Esophagus squamous epithelium (tissue), 5 donors: ENCODE measurements at regions of chr2 and their contacts with region 1.

Region 1: DNA sequence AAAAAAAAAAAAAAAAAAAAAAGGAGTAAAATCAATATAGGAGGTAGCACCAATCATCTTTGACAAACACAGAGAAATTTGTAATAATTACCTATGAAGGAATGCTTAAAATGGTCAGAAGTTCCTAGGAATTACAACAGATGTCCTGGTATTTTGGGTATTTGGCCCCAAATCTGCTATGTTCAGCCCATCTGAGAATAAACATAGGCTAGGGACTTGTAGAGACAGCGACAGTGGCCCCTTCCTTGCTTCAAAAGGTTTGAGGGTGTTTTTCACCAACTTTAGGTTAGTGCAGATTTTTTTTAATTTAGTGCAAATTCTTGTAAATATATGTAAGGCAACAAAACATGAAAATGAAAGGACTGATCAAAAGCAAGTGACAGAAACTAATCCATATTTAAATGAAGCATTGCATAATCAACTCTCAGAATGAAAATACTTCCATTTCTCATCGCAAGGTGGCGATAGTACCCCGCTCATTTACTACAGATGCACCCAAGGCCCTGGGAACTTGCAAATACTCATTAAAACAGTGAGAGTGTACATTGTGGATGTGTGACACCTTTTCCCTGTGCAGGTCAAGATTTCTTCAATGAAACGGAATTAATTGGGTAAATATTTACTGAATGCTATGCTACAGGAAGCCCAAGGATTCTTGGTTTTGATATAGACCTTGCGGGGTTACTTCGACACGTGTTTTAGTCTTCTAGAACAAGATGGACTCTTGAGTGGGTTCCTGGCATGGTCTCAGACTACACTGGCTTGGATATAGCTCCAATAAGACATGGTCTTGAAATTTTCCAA is 44.6 kb downstream of the FAM124B start:
- DNase-seq: no peak
- H3K4me3 ChIP-seq: no peak overlapping the region
- H3K27ac ChIP-seq: no peak overlapping the region
- H3K4me1 ChIP-seq: peaks cover 0 to 12% (median 0%) of the 10 kb centered on the region in 3 donors
- H3K27me3 ChIP-seq: no peaks in the 10 kb centered on the region
- CTCF ChIP-seq: peak; percentile 36 to 90 (median 86)
- POLR2A ChIP-seq: no peak

Region 2: GRCh38 chr2:224442071-224442967 is 85.0 kb after region 1 on chr2:
- intact Hi-C with region 1: loop called (anchors 5 kb)
- DNase-seq: no peak
- H3K4me3 ChIP-seq: peak overlapping the region; percentile 48 to 68 (median 56)
- H3K27ac ChIP-seq: peak overlapping the region; percentile 41 to 81 (median 73)
- H3K4me1 ChIP-seq: peaks cover 3 to 58% (median 14%) of the 10 kb centered on the region in 3 donors
- H3K27me3 ChIP-seq: peaks cover 0 to 12% (median 0%) of the 10 kb centered on the region in 4 donors
- CTCF ChIP-seq: no peak
- POLR2A ChIP-seq: no peak

Region 3: GRCh38 chr2:224520064-224520463 is 162.8 kb after region 1 on chr2:
- intact Hi-C with region 1: no loop called
- DNase-seq: no peak
- H3K4me3 ChIP-seq: no peak overlapping the region
- H3K27ac ChIP-seq: peak overlapping the region in 2 of 4 donors; percentile 1 to 3
- H3K4me1 ChIP-seq: peaks cover 24 to 80% (median 45%) of the 10 kb centered on the region in 3 donors
- H3K27me3 ChIP-seq: no peaks in the 10 kb centered on the region
- CTCF ChIP-seq: no peak
- POLR2A ChIP-seq: no peak

Region 4: GRCh38 chr2:224594840-224595239 is 237.5 kb after region 1 on chr2:
- intact Hi-C with region 1: no loop called
- DNase-seq: no peak
- H3K4me3 ChIP-seq: no peak overlapping the region
- H3K27ac ChIP-seq: no peak overlapping the region
- H3K4me1 ChIP-seq: no peaks in the 10 kb centered on the region
- H3K27me3 ChIP-seq: no peaks in the 10 kb centered on the region
- CTCF ChIP-seq: no peak
- POLR2A ChIP-seq: no peak

Region 5: DNA sequence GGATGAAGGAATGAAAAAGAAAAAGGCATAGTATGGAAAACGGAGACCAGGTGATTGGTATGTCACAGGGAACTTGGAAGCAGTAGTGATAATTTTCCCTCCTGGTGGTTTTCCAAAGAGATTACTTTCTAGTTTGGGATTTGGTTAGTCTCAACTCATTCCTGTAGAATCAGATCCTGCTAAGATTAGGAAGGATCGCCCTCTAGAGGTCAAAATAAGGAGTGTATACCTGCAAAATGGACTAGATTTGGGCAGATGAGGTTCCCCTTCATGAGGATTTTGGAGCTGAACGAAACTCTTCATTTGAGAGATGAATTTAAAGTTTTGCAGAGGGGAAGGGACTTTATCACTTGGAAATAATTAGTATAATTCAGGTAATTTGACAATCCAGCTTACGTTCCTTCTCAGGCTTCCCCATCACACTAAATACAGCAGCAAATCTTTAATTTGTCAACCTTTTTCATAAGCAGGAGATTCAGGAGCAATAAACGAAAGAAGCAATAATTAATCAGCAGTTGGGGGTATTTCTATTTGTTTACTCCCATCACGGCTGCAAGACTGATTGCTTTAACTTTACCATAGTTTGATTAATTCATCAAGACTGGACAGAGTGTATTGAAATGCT is 293.6 kb after region 1 on chr2:
- intact Hi-C with region 1: loop called (anchors 5 kb)
- DNase-seq: no peak
- H3K4me3 ChIP-seq: no peak overlapping the region
- H3K27ac ChIP-seq: no peak overlapping the region
- H3K4me1 ChIP-seq: no peaks in the 10 kb centered on the region
- H3K27me3 ChIP-seq: no peaks in the 10 kb centered on the region
- CTCF ChIP-seq: peak; percentile 56 to 77 (median 70)
- POLR2A ChIP-seq: no peak

Region 6: DNA sequence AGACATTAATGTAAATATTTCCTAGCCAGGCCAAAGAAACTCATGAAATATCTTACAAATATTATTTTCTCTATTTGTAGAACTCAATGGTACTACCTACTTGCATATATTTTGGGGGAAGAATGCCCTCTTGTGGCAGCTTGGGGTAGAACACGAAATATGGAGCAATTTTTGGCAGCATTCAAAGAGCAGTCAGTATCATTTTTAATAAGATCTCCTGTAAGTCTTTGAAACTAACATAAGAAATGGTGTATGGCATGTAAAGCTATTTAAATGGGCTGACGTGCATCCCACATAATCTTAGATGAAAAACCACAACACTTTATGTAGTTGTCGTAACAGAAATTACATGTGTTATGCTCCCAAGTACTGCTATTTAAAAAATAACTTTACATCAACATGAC is 421.2 kb after region 1 on chr2:
- intact Hi-C with region 1: loop called (anchors 10 kb)
- DNase-seq: no peak
- H3K4me3 ChIP-seq: no peak overlapping the region
- H3K27ac ChIP-seq: no peak overlapping the region
- H3K4me1 ChIP-seq: peaks cover 0 to 14% (median 0%) of the 10 kb centered on the region in 3 donors
- H3K27me3 ChIP-seq: no peaks in the 10 kb centered on the region
- CTCF ChIP-seq: peak; percentile 41 to 81 (median 70)
- POLR2A ChIP-seq: no peak